Vagina (tissue), 2 donors: ENCODE measurements at regions of chr1 and their contacts with region 1.

Region 1: GRCh38 chr1:47710329-47711071 is 272.7 kb downstream of the FOXD2 start:
- DNase-seq: no peak
- H3K4me3 ChIP-seq: peak overlapping the region in 1 of 2 donors; percentile 49
- H3K27ac ChIP-seq: no peak overlapping the region
- H3K4me1 ChIP-seq: peaks cover 28% of the 10 kb centered on the region
- H3K27me3 ChIP-seq: peaks cover 11% of the 10 kb centered on the region
- CTCF ChIP-seq: peak; percentile 80 to 99 (median 93)
- POLR2A ChIP-seq: no peak

Region 2: GRCh38 chr1:47437447-47438164 is 272.9 kb before region 1 on chr1 and contains the start of gene FOXD2:
- intact Hi-C with region 1: loop called (anchors 1 kb)
- DNase-seq: no peak
- H3K4me3 ChIP-seq: peak within 1 kb of the TSS; percentile 50 to 66
- H3K27ac ChIP-seq: peak within 1 kb of the TSS; percentile 50
- H3K4me1 ChIP-seq: peaks cover 43% of the 10 kb centered on the region
- H3K27me3 ChIP-seq: peaks cover 21% of the 10 kb centered on the region
- CTCF ChIP-seq: peak; percentile 96 to 98 (median 97)
- POLR2A ChIP-seq: peak in 1 of 2 donors; percentile 33
- total RNA-seq, gene FOXD2: 0.98 TPM

Region 3: GRCh38 chr1:47491341-47491753 is 219.2 kb before region 1 on chr1:
- intact Hi-C with region 1: no loop called
- DNase-seq: no peak
- H3K4me3 ChIP-seq: no peak overlapping the region
- H3K27ac ChIP-seq: no peak overlapping the region
- H3K4me1 ChIP-seq: no peaks in the 10 kb centered on the region
- H3K27me3 ChIP-seq: no peaks in the 10 kb centered on the region
- CTCF ChIP-seq: no peak
- POLR2A ChIP-seq: no peak

Region 4: DNA sequence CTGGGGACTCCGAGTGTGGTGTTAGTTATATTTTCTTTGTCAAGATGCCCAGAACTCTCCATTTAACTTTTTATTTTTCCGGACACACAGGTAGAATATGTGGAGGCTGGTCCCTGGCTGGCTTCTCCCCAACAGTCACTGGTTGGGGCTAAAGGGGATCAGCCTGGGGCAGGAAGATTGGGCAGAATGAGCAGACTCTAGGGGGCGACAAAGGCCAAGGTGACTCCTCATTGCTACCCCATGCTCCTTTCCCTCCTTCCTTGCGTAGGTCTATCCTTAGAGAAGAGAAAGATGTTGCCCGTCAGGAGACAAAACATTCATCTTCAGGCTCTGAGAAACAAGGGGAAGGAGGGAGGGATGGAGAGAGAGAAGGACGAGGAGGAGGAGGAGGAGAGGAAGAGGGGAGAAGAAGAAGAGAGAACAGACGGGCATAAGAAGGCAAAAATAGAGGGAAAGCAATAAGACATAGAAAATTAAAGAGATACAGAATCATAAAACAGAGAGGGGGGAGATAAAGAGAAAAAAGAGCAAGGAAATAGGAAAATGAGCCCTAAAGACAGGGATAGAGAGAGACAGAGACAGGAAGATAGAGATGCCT is 182.7 kb before region 1 on chr1:
- intact Hi-C with region 1: loop called (anchors 2 kb)
- DNase-seq: no peak
- H3K4me3 ChIP-seq: no peak overlapping the region
- H3K27ac ChIP-seq: no peak overlapping the region
- H3K4me1 ChIP-seq: no peaks in the 10 kb centered on the region
- H3K27me3 ChIP-seq: no peaks in the 10 kb centered on the region
- CTCF ChIP-seq: no peak
- POLR2A ChIP-seq: no peak

Region 5: GRCh38 chr1:47587891-47588582 is 122.5 kb before region 1 on chr1:
- intact Hi-C with region 1: loop called (anchors 10 kb)
- DNase-seq: peak in 1 of 2 donors; percentile 82
- H3K4me3 ChIP-seq: no peak overlapping the region
- H3K27ac ChIP-seq: no peak overlapping the region
- H3K4me1 ChIP-seq: peaks cover 4% of the 10 kb centered on the region
- H3K27me3 ChIP-seq: no peaks in the 10 kb centered on the region
- CTCF ChIP-seq: no peak
- POLR2A ChIP-seq: no peak